ENCODE measurements at regions of chr16 and their contacts with region 1.

Region 1: DNA sequence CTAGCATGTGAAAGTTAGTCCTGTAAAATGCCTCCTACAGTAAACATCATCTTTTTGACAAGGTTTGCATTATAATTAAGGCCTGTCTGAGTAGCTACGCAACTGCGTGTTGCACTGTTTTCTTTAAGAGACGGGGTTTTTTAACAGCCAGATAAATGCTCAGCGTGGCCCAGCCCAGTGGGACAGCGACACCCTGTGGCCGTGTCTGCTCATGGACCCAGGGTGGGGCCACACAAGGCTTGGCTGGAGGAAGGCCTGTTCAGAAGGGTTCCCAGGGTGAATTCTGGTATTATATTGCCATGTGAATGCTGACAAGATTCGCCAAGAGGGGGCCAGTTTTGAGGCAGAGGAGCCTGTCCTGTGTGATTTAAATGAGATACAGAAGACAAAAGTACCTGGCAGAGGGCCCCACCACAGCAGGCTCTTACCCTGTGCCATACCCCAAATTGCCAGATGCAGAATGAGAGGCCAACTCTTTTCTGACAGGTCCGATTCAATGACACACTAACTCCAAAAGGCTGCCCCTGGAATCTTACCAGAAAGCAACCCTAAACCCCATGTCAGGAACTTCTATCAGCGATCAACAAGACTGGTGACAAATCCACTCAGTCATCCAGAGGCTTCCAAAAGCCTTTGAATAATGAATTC is 65.9 kb upstream of the IRX6 start:
- DNase-seq: peak; percentile 57 to 92
- H3K4me3 ChIP-seq: no peak overlapping the region
- H3K27ac ChIP-seq: no peak overlapping the region
- H3K4me1 ChIP-seq: no peaks in the 10 kb centered on the region
- H3K27me3 ChIP-seq: no peaks in the 10 kb centered on the region; a peak in 1 of 7 replicates
- CTCF ChIP-seq: peak; percentile 92 to 98 (median 95)
- EP300 ChIP-seq: no peak
- POLR2A ChIP-seq: no peak
- RAD21 ChIP-seq: peak; percentile 99 to 100

Region 2: DNA sequence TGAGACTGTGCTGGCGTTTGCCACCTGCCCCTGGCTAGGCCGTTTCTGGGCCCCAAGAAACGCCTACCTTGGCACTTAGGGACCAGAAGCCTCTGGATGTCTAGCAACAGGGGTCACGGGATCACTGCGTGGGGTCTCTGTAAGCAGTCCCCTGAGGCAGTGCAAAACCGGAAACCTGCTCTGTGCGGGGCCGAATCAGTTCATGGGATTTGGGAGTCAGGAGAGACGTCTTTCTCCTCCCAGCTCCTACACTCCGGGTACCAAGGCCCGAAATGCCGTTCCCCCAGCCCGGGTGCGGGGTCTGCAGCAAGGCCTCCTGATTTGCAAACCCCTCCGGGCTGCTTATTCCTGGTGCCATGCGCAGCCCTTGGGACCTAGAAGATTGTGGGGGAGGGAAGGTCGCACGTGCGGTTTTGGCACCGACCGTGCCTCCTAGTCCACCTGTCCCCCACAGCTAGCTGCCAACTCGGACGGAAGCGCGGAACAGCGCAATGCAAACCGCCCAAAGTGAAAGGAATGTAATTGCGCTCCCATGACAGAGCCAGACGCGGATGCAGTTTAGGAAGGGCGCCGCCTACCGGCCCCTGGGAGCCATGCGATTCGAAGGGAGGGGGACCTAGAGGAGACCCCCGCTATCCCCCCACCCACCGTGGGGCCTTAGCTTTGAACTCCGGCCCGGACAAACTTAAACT is 321.0 kb before region 1 on chr16:
- CTCF ChIA-PET with region 1: interaction called, 10 read pairs
- POLR2A ChIA-PET with region 1: no interaction called
- DNase-seq: peak in 1 of 2 experiments; percentile 90
- H3K4me3 ChIP-seq: peak overlapping the region; percentile 31 to 68 (median 58)
- H3K27ac ChIP-seq: no peak overlapping the region
- H3K4me1 ChIP-seq: peaks cover 0 to 37% (median 25%) of the 10 kb centered on the region in 4 experiments; a peak in 6 of 7 replicates
- H3K27me3 ChIP-seq: peaks cover 61 to 93% (median 87%) of the 10 kb centered on the region in 4 experiments
- CTCF ChIP-seq: peak; percentile 57 to 83 (median 83)
- EP300 ChIP-seq: no peak
- POLR2A ChIP-seq: no peak
- RAD21 ChIP-seq: peak; percentile 50 to 56

Region 3: DNA sequence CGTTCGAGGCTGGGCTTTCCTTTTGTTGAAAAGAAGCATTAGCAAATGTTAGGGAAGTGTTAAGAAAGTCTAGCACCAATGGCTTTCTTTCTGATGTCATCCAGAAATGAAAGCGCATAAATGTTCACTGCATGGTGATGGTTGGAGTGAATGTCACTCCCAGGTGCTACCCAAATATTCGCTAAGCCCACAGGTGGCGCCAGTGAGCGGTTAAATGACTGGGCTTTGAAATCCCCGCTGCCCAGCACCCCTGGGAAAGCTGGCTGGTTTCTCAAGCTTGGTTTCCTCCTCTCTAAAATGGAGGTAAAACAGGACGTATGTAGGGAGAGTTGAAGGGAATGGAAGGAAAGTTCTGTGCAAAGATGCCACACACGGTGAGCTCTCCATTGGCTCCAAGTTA is 223.1 kb before region 1 on chr16:
- CTCF ChIA-PET with region 1: interaction called, 26 read pairs
- POLR2A ChIA-PET with region 1: no interaction called
- DNase-seq: peak in 1 of 2 experiments; percentile 92
- H3K4me3 ChIP-seq: no peak overlapping the region
- H3K27ac ChIP-seq: no peak overlapping the region
- H3K4me1 ChIP-seq: no peaks in the 10 kb centered on the region
- H3K27me3 ChIP-seq: no peaks in the 10 kb centered on the region
- CTCF ChIP-seq: peak; percentile 64 to 81 (median 73)
- EP300 ChIP-seq: no peak
- POLR2A ChIP-seq: no peak
- RAD21 ChIP-seq: peak; percentile 67 to 75

Region 4: GRCh38 chr16:55120408-55120807 is 137.7 kb before region 1 on chr16:
- CTCF ChIA-PET with region 1: interaction called, 30 read pairs
- POLR2A ChIA-PET with region 1: no interaction called
- DNase-seq: no peak
- H3K4me3 ChIP-seq: no peak overlapping the region
- H3K27ac ChIP-seq: no peak overlapping the region
- H3K4me1 ChIP-seq: no peaks in the 10 kb centered on the region
- H3K27me3 ChIP-seq: no peaks in the 10 kb centered on the region
- CTCF ChIP-seq: peak in 2 of 3 experiments; percentile 37 to 41; a peak in 3 of 4 replicates
- EP300 ChIP-seq: no peak
- POLR2A ChIP-seq: no peak
- RAD21 ChIP-seq: peak; percentile 66 to 73

Region 5: GRCh38 chr16:55133654-55134053 is 124.4 kb before region 1 on chr16:
- CTCF ChIA-PET with region 1: interaction called, 10 read pairs
- POLR2A ChIA-PET with region 1: no interaction called
- DNase-seq: no peak
- H3K4me3 ChIP-seq: no peak overlapping the region
- H3K27ac ChIP-seq: no peak overlapping the region
- H3K4me1 ChIP-seq: peaks cover 0 to 2% (median 0%) of the 10 kb centered on the region in 4 experiments; a peak in 1 of 7 replicates
- H3K27me3 ChIP-seq: no peaks in the 10 kb centered on the region
- CTCF ChIP-seq: no peak
- EP300 ChIP-seq: no peak
- POLR2A ChIP-seq: no peak
- RAD21 ChIP-seq: no peak

Measured in H1 (cell line).